PC-9 (cell line): ENCODE measurements at regions of chr12 and their contacts with region 1.

Region 1: DNA sequence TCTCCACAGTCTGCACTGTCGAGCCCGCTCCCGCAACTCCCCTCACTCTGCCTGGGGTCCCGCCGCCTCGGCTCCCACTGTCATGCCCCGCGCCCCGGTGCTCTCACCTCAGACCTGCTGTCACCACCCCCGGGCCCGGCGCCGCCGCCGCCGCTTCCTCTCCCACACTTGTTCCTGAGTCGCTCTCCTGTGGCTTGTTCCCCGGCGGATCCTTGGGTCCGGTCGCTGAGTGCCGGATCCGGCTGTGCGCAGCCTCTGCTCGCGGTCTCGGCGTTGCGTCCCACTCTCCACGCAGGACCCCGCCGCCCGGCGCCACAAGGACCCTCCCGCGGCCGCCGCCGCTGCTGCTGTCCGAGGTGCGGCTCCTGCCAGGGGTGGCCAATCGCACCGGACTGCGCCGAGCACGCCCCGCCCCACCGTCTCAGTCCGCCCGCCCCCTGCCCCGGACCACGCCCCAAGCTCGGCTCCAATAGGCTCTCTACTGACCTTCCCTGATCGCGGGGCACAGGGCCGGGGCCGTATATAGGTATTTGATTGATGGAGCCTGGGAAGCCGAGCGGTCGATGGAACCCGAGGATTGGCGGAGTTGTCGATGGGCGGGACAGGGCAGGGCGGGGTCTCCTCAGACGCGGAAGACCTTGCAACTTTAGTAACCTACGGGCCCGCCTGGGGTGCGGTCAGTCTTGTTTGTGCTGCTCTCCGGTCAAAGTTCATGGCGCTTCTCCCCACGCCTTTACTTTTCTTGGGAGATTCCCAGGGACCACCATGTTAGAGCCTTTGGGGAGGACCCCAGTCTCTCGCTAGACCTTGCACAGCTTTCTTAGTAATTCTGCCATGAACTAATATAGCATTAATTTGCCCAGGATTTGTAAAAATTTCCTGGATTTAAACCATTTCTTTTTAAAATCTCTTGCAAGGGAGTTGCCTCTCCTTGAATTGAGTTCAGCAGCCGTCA is at the start of gene TAOK3:
- DNase-seq: peak; percentile 96 to 97
- H3K4me3 ChIP-seq: peak within 1 kb of the TSS; percentile 77
- H3K27ac ChIP-seq: peak within 1 kb of the TSS; percentile 72
- H3K4me1 ChIP-seq: peaks cover 30% of the 10 kb centered on the region
- H3K27me3 ChIP-seq: no peaks in the 10 kb centered on the region
- CTCF ChIP-seq: no peak
- total RNA-seq, gene TAOK3: 55.8 and 60.5 TPM in 2 replicates

Region 2: DNA sequence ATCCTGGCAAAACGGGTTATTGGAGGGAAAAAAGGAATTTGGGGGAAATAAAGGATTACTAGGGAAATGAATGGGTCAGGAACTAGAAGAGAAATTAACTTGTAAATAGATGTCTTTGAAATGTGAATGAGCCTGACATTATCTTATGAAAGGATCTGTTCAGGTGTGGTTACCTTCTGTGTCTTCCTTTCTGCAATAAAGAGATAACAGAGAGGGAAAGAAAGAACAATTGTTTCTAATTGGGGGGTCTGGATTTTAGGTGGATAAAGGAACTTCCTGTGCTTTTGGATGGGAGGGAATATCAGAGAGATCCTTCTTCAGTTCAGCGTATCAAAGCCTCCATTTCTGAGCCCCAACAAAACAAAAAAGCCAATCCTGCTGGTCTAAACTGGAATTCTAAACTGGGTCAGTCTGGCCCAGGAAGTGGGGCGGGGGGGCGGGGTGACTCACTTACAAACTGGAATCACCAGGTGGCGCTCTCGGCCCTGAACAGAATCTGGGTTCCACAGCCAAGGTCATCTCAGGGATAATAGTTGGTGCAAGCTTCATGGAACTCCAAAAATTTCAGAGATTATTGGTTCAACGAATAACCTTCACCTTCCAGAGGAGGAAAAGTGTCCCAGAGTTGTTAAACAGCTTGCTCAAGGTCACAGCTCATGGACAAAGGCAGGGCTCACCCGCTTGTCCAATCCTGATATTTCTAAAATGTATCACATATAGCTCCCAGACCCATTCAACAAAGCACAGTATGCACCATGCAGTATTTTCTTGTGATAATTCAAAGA is 252.0 kb before region 1 on chr12:
- CTCF ChIA-PET with region 1: interaction called, 9 read pairs
- POLR2A ChIA-PET with region 1: interaction called, 4 read pairs
- intact Hi-C with region 1: loop called (anchors 1 kb)
- DNase-seq: peak in 1 of 2 experiments; percentile 51
- H3K4me3 ChIP-seq: no peak overlapping the region
- H3K27ac ChIP-seq: no peak overlapping the region
- H3K4me1 ChIP-seq: no peaks in the 10 kb centered on the region
- H3K27me3 ChIP-seq: no peaks in the 10 kb centered on the region
- CTCF ChIP-seq: peak; percentile 67

Region 3: DNA sequence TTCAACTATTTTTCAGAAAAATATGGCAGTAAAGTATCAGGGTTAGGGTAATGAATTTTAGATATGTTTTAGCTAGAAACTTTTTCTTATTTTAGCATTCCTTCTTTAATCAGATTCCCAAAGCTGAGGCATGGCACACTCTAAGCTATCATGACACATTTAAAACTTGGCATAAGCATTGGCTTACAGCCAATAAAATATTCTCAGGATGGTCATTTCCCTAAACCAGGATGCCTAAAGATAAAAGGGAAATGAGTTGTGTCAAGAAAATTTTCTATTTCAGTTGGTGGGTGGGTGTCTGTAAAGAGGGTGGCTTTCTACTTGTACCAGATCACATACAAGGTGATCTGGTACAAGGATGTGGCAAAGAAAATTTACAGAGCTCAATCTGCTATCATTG is 189.1 kb before region 1 on chr12:
- CTCF ChIA-PET with region 1: interaction called, 14 read pairs
- POLR2A ChIA-PET with region 1: no interaction called
- intact Hi-C with region 1: loop called (anchors 1 kb)
- DNase-seq: no peak
- H3K4me3 ChIP-seq: no peak overlapping the region
- H3K27ac ChIP-seq: peak overlapping the region; percentile 55; the same call in 1 of the 2 replicates
- H3K4me1 ChIP-seq: peaks cover 5% of the 10 kb centered on the region; the same call in 1 of the 2 replicates
- H3K27me3 ChIP-seq: no peaks in the 10 kb centered on the region
- CTCF ChIP-seq: no peak

Region 4: DNA sequence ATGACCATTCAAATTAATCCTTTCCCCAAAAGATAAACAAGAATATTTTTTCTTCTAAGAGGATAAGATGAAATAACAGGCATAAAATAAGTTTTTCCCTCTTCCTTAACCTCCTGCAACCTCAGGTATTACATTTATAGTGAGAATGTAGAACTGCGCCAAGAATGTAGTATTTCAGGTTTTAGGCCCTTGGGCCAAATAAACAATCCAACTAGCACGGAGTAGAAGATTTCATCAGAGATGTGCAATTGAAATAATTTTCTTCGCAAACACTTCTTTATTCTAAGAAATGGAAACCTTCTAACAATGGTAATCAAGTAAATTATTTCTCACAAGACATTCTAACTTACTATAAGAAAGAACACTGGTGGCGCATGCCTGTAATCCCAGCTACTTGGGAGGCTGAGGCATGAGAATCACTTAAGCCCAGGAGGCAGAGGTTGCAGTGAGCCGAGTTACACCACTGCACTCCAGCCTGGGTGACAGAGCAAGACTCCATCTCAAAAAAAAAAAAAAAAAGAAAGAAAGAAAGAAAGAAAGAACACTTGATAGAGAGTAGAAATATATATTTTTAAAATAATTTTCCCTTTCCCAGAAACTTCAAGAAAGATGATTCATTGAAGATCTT is 100.9 kb before region 1 on chr12:
- CTCF ChIA-PET with region 1: no interaction called
- POLR2A ChIA-PET with region 1: no interaction called
- intact Hi-C with region 1: loop called (anchors 1 kb)
- DNase-seq: peak; percentile 59 to 94
- H3K4me3 ChIP-seq: peak overlapping the region; percentile 49
- H3K27ac ChIP-seq: peak overlapping the region; percentile 96
- H3K4me1 ChIP-seq: peaks cover 61% of the 10 kb centered on the region
- H3K27me3 ChIP-seq: no peaks in the 10 kb centered on the region
- CTCF ChIP-seq: no peak

Region 5: DNA sequence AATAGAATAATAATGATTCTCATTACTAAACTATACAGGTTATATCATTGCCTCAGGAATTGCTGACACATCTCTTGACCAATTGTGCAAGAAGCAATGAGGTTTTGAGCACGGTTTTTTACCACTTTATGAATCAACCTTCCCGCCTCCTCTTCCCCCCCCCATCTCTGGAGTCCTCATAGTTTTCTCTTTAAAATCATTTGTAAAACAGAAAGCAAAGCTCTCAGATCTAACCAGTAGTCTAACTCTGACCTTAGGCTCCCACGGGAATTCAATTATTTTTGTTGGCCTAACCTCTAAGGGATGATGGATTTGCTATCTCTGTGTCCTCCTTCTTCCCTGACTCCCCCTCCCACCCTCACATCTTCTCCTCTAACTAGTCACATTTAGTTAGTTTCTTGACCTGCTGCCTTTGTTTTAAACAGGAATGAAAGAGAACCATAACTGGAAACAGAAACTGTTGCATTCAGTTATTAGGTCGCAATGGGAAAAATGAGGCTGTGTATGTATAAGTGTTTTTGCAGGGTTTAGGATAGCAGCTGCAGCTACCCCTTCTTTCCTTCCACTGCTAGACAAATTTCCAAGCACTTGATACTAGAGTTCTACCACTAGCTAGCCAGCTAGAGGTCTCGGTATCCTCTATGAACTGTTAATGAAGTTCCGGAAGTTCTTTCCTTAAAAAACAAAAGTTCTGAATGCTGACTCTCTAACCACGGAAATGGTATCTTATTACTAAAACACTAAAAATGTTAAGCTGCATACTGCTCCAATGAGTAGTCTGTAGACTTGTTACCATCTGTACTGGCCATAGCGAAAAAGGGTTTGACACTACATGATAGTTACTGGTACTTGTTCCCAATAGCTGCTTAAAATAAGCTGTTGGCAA is 65.5 kb before region 1 on chr12:
- CTCF ChIA-PET with region 1: interaction called, 15 read pairs
- POLR2A ChIA-PET with region 1: interaction called, 7 read pairs
- intact Hi-C with region 1: loop called (anchors 1 kb)
- DNase-seq: peak; percentile 12 to 90
- H3K4me3 ChIP-seq: peak overlapping the region; percentile 50; the same call in 1 of the 2 replicates
- H3K27ac ChIP-seq: peak overlapping the region; percentile 96
- H3K4me1 ChIP-seq: peaks cover 74% of the 10 kb centered on the region
- H3K27me3 ChIP-seq: no peaks in the 10 kb centered on the region
- CTCF ChIP-seq: no peak